Tibial artery (tissue), 4 donors: ENCODE measurements at regions of chr2 and their contacts with region 1.

Region 1: GRCh38 chr2:69149631-69150215 is 136.7 kb downstream of the ANTXR1 start:
- DNase-seq: peak; percentile 59 to 89
- H3K4me3 ChIP-seq: no peak overlapping the region
- H3K27ac ChIP-seq: peak overlapping the region; percentile 74 to 83
- H3K4me1 ChIP-seq: peaks cover 0 to 74% (median 63%) of the 10 kb centered on the region in 4 donors
- H3K27me3 ChIP-seq: no peaks in the 10 kb centered on the region
- CTCF ChIP-seq: no peak

Region 2: DNA sequence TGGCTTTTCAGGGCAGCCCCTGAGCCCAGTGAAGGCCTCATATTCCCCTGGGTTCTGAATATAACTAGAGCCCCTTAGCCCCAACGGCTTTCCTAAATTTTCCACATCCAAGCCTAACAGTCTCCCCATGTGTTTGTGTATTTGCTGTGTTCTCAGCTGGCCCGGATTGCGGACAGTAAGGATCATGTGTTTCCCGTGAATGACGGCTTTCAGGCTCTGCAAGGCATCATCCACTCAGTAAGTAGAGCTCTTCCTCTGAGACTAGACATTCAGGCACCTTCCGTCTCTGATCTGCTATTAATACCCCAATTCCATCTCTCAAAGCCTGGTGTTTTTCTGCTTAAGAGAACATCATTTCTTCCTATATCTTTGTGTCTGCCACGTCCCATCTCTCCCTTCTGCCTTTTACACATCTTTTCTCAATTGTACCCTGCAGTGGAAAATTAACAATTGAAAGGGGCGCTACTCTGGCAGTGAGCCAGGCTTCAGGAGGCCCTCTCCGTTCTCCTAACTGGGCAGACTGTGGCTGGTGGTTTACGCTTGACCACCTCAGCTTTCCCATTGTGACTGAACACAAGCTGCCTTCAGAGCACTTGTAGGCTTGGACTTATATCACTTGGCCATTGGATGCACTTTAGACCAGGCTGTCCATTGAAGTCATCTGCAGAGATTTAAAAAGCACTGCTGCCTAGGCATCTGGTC is 72.3 kb before region 1 on chr2:
- intact Hi-C with region 1: loop called (anchors 2 kb)
- DNase-seq: no peak
- H3K4me3 ChIP-seq: no peak overlapping the region
- H3K27ac ChIP-seq: peak overlapping the region; percentile 45 to 48
- H3K4me1 ChIP-seq: peaks cover 0 to 83% (median 11%) of the 10 kb centered on the region in 4 donors
- H3K27me3 ChIP-seq: no peaks in the 10 kb centered on the region
- CTCF ChIP-seq: no peak